HCT116 (cell line): ENCODE measurements at regions of chr9 and their contacts with region 1.

Region 1: DNA sequence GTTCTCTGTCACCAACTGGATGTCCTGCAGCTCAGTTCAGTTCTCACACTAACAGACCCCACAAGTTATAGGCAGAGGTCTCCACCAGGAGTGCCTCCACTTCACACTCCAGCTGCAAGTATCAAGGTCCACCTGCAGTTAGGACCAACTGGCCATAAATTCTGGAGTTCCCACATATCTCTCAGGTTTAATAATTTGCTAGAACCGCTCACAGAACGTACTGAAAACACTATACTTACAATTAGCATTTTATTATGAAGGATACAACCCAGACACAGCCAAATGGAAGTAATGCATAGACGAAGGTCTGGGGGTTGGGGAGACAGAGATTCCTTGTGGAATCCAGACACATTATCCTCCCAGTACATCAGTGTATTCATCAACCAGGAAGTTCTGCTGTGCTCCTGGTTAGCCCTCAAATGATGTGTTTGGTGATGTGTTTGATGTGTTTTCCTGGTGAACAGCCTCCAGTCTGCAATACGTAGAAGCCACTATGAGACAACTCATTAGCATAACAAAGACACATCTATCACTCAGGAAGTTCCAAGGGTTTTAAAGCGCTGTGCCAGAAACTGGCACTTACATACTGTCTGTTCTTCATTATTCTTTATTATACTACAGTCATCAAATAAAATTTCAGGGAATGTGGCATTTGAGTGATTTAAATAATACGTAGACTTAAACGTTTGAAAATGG is 25.4 kb downstream of the OGN start:
- DNase-seq: no peak
- ATAC-seq: no peak
- H3K4me3 ChIP-seq: no peak overlapping the region
- H3K27ac ChIP-seq: no peak overlapping the region
- H3K4me1 ChIP-seq: no peaks in the 10 kb centered on the region
- H3K27me3 ChIP-seq: no peaks in the 10 kb centered on the region
- CTCF ChIP-seq: no peak
- POLR2A ChIP-seq: no peak
- RAD21 ChIP-seq: no peak

Region 2: GRCh38 chr9:92133949-92134604 is 244.9 kb before region 1 on chr9:
- CTCF ChIA-PET with region 1: no interaction called
- POLR2A ChIA-PET with region 1: no interaction called
- RAD21 ChIA-PET with region 1: no interaction called
- intact Hi-C with region 1: no loop called
- DNase-seq: peak; percentile 74
- ATAC-seq: peak; percentile 89
- H3K4me3 ChIP-seq: peak overlapping the region; percentile 19 to 45; a peak in 3 of 4 replicates
- H3K27ac ChIP-seq: no peak overlapping the region
- H3K4me1 ChIP-seq: peaks cover 0 to 13% of the 10 kb centered on the region in 2 experiments; a peak in 2 of 4 replicates
- H3K27me3 ChIP-seq: no peaks in the 10 kb centered on the region
- CTCF ChIP-seq: peak; percentile 77 to 98 (median 96)
- POLR2A ChIP-seq: no peak
- RAD21 ChIP-seq: peak; percentile 91

Region 3: DNA sequence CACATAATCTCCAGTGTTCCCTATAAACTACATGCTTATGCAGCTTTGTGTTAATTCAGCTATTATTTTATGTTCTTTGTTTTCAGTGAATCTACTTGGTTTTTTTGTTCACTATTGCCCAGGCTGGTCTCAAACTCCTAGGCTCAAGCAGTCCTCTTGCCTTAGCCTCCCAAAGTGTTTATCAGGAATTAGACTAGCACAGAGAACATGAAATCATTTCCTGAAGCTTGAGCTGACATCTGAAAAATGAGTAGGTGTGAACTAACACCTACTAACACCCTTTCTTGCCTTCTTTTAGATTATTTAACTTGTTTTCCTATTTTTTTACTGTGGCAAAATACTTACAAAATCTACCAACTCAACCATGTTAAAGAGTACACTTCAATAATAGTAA is 28.3 kb before region 1 on chr9:
- CTCF ChIA-PET with region 1: no interaction called
- POLR2A ChIA-PET with region 1: no interaction called
- RAD21 ChIA-PET with region 1: no interaction called
- intact Hi-C with region 1: loop called (anchors 1 kb)
- DNase-seq: no peak
- ATAC-seq: no peak
- H3K4me3 ChIP-seq: no peak overlapping the region
- H3K27ac ChIP-seq: no peak overlapping the region
- H3K4me1 ChIP-seq: no peaks in the 10 kb centered on the region
- H3K27me3 ChIP-seq: no peaks in the 10 kb centered on the region
- CTCF ChIP-seq: no peak
- POLR2A ChIP-seq: no peak
- RAD21 ChIP-seq: no peak

Region 4: DNA sequence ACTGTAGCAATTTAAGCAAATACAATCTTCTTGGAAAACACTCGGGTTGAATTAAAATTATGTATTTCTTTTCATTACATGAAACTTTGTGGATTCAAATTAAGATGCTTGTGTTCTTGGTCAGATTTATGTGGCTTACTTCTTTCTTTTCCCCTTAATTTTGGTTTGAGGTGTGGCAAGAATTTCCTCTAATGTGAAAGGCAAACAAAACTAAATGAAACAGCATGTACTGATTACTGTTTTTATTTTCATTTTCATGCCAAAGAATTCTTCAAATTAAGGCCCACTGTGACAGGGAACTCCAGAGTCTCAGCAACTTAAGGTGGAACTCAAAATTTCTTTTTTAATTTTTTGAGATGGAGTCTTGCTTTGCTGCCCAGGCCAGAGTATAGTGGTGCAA is 45.3 kb after region 1 on chr9 and contains the start of gene OMD:
- CTCF ChIA-PET with region 1: no interaction called
- POLR2A ChIA-PET with region 1: no interaction called
- RAD21 ChIA-PET with region 1: no interaction called
- intact Hi-C with region 1: no loop called
- DNase-seq: no peak
- ATAC-seq: no peak
- H3K4me3 ChIP-seq: no peak within 1 kb of the TSS
- H3K27ac ChIP-seq: no peak within 1 kb of the TSS
- H3K4me1 ChIP-seq: no peaks in the 10 kb centered on the region
- H3K27me3 ChIP-seq: no peaks in the 10 kb centered on the region
- CTCF ChIP-seq: no peak
- POLR2A ChIP-seq: no peak
- RAD21 ChIP-seq: no peak
- total RNA-seq, gene OMD: not detected